MCF 10A (cell line): ENCODE measurements at regions of chr2 and their contacts with region 1.

Region 1: DNA sequence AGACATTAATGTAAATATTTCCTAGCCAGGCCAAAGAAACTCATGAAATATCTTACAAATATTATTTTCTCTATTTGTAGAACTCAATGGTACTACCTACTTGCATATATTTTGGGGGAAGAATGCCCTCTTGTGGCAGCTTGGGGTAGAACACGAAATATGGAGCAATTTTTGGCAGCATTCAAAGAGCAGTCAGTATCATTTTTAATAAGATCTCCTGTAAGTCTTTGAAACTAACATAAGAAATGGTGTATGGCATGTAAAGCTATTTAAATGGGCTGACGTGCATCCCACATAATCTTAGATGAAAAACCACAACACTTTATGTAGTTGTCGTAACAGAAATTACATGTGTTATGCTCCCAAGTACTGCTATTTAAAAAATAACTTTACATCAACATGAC is 62.3 kb upstream of the CCDC195 start:
- DNase-seq: peak; percentile 75
- H3K4me3 Mint-ChIP-seq: no peak overlapping the region
- H3K27ac Mint-ChIP-seq: no peak overlapping the region
- H3K4me1 Mint-ChIP-seq: peaks cover 4% of the 10 kb centered on the region
- H3K27me3 Mint-ChIP-seq: no peaks in the 10 kb centered on the region
- CTCF ChIP-seq: peak; percentile 50

Region 2: DNA sequence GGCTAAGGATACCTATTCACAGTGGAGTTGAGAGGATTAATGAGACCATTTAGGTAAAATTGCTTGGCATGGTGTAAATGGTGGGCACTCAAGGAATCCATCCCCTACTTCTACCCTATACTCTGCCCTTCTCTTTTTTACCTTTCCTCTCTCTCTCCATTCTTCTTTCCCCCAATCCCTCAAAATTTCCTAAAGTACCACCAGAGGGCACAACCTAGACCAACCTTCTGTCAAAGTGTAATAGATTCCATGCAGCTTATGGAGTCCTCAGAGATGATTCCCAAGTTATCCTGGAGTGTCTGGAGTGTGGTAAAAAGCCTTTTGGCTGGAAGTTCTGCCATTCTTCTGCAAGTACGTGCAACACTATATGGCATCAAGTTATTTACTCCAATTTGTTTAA is 29.3 kb before region 1 on chr2:
- CTCF ChIA-PET with region 1: interaction called, 5 read pairs
- POLR2A ChIA-PET with region 1: interaction called, 8 read pairs
- intact Hi-C with region 1: loop called (anchors 2 kb)
- DNase-seq: peak; percentile 17
- H3K4me3 Mint-ChIP-seq: no peak overlapping the region
- H3K27ac Mint-ChIP-seq: no peak overlapping the region
- H3K4me1 Mint-ChIP-seq: peaks cover 2% of the 10 kb centered on the region
- H3K27me3 Mint-ChIP-seq: no peaks in the 10 kb centered on the region
- CTCF ChIP-seq: no peak